ENCODE measurements at regions of chr13 and their contacts with region 1.

Region 1: DNA sequence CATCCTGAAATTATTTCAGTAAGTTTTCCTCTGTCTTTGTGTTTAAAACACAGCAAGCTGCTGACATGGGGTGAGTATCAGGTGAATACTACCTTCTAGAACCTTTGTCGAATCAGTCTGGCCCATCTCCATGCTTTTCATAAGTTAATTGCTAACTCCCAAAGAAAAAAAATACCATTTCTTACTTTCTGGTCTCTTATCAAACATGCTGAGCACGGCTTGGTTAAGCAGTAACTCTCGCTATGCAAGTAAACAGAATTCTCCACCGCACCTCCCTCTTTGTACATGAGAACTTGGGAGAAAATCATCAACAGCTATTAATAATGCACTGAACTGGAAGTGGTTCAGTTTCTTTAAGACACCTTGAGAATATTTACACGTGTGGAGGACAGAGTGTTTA is 88.6 kb downstream of the FGF9 start:
- DNase-seq: no peak
- H3K4me3 ChIP-seq: no peak overlapping the region
- H3K27ac ChIP-seq: no peak overlapping the region
- H3K4me1 ChIP-seq: no peaks in the 10 kb centered on the region
- H3K27me3 ChIP-seq: no peaks in the 10 kb centered on the region
- CTCF ChIP-seq: no peak
- EP300 ChIP-seq: no peak
- POLR2A ChIP-seq: no peak

Region 2: DNA sequence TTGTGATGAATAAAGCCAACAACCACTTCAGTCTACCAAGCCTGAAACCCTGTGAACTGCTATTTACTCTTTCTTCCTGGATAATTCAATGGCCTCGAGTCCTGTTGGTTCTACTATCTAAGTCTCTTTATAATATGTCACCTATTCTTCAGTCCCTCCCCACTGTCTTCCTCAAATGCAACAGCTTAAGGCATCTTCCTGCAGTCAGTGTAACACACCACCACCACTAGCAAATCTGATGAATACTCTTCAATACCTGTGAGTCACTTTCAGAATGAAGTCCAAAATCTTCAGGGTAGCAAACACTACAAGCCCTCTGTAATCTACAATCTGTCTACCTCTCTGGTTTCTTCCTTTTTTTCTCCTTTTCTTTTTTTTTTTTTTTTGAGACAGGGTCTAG is 333.2 kb before region 1 on chr13:
- in situ Hi-C with region 1: no loop called
- intact Hi-C with region 1: no loop called
- DNase-seq: no peak
- H3K4me3 ChIP-seq: no peak overlapping the region
- H3K27ac ChIP-seq: no peak overlapping the region
- H3K4me1 ChIP-seq: no peaks in the 10 kb centered on the region
- H3K27me3 ChIP-seq: no peaks in the 10 kb centered on the region
- CTCF ChIP-seq: no peak
- EP300 ChIP-seq: no peak
- POLR2A ChIP-seq: no peak

Region 3: DNA sequence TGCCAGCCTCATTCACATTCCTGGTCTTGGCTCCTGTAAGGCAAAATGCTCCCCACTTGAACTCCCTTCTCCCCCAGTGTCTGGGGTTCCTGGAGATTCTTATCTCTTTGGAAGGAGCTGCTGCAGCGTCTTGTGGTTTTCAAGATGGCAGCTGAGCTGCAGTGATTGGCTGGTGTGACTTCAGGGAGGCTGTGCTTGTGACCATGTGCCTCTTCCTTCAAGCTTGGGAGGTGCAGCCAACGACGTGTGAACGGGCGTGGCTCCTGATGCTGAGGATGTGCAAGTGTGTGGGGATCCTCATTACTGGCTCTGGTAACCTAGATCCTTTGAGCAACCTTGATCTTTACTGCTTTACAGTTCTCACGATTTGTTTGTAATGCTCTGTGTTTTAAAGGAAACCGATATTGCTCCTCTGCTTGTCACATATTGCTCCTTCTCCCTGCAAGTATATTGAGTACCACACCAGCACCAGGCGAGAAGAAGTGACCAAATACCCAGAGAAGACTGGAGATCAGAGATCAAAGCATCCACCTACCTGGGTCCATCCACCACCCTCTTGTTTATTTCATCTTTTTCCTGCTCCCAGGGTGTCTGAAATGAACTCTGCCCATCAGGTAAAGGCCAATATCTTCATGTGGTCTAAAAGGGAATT is 119.9 kb after region 1 on chr13:
- in situ Hi-C with region 1: no loop called
- intact Hi-C with region 1: loop called (anchors 5 kb)
- DNase-seq: no peak
- H3K4me3 ChIP-seq: no peak overlapping the region
- H3K27ac ChIP-seq: no peak overlapping the region
- H3K4me1 ChIP-seq: no peaks in the 10 kb centered on the region
- H3K27me3 ChIP-seq: no peaks in the 10 kb centered on the region
- CTCF ChIP-seq: no peak
- EP300 ChIP-seq: no peak
- POLR2A ChIP-seq: no peak

Measured in transverse colon (tissue), 4 donors.